Prostate gland (tissue), 2 donors: ENCODE measurements at regions of chr21 and their contacts with region 1.

Region 1: DNA sequence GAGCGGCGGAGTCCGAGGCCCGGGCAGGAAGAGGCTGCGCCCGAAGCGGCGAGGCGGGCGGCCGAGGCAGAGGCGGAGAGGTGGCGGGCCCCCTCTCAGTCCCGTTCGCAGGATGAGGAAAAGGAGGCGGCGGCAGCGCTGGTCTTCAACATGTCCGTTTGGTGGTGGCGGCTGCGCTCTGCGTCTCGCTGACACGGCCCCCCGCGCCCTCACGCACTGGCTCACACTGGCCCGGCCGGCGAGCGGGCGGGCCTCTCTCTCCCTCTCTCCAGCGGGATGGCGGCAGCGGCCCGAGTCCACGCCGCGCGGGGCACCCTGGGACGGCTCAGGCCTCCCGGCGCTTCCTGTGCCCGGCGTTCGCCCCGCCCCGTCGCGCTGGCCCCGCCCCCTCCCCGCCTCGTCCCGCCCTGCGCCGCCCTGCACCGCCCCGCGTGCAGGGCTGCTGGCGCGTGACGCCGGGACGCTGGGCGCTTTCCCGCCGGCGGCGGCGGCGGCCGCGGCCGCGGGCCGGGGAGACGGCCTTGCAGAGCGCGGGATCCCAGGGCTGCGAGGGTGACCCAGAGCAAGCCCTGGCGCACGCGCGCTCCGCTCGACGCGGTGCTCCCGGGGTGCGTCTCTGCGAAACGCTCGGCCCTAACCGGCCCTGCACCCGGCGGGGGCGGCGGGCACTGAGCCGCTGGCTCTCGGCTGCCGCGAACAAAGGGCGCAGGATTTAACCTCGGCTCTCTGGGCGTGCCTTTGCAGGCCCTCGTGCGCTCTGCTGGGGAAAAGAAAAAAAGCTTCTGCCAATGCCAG is at the start of gene SCAF4:
- DNase-seq: peak; percentile 88
- H3K4me3 ChIP-seq: peak within 1 kb of the TSS; percentile 69 to 98
- H3K27ac ChIP-seq: peak within 1 kb of the TSS; percentile 90 to 93
- H3K4me1 ChIP-seq: no peaks in the 10 kb centered on the region
- H3K27me3 ChIP-seq: no peaks in the 10 kb centered on the region
- CTCF ChIP-seq: peak in 1 of 4 experiments; percentile 17
- POLR2A ChIP-seq: peak; percentile 89
- total RNA-seq, gene SCAF4: 12.6 to 29.5 TPM

Region 2: GRCh38 chr21:31410499-31411131 is 321.4 kb before region 1 on chr21:
- intact Hi-C with region 1: no loop called
- DNase-seq: no peak
- H3K4me3 ChIP-seq: no peak overlapping the region
- H3K27ac ChIP-seq: no peak overlapping the region
- H3K4me1 ChIP-seq: no peaks in the 10 kb centered on the region
- H3K27me3 ChIP-seq: no peaks in the 10 kb centered on the region
- CTCF ChIP-seq: no peak
- POLR2A ChIP-seq: no peak

Region 3: GRCh38 chr21:31659536-31660258 is 72.3 kb before region 1 on chr21 and contains the start of gene SOD1:
- intact Hi-C with region 1: loop called (anchors 2 kb)
- DNase-seq: peak; percentile 94
- H3K4me3 ChIP-seq: peak within 1 kb of the TSS; percentile 88 to 95
- H3K27ac ChIP-seq: peak within 1 kb of the TSS; percentile 82 to 87
- H3K4me1 ChIP-seq: no peaks in the 10 kb centered on the region
- H3K27me3 ChIP-seq: no peaks in the 10 kb centered on the region
- CTCF ChIP-seq: peak in 3 of 4 experiments; percentile 16 to 72 (median 52)
- POLR2A ChIP-seq: peak; percentile 84
- total RNA-seq, gene SOD1: 165 to 282 TPM

Region 4: GRCh38 chr21:31813862-31814261 is 81.9 kb after region 1 on chr21:
- intact Hi-C with region 1: no loop called
- DNase-seq: no peak
- H3K4me3 ChIP-seq: no peak overlapping the region
- H3K27ac ChIP-seq: no peak overlapping the region
- H3K4me1 ChIP-seq: no peaks in the 10 kb centered on the region
- H3K27me3 ChIP-seq: no peaks in the 10 kb centered on the region
- CTCF ChIP-seq: no peak
- POLR2A ChIP-seq: no peak